ENCODE measurements at regions of chr16 and their contacts with region 1.

Region 1: DNA sequence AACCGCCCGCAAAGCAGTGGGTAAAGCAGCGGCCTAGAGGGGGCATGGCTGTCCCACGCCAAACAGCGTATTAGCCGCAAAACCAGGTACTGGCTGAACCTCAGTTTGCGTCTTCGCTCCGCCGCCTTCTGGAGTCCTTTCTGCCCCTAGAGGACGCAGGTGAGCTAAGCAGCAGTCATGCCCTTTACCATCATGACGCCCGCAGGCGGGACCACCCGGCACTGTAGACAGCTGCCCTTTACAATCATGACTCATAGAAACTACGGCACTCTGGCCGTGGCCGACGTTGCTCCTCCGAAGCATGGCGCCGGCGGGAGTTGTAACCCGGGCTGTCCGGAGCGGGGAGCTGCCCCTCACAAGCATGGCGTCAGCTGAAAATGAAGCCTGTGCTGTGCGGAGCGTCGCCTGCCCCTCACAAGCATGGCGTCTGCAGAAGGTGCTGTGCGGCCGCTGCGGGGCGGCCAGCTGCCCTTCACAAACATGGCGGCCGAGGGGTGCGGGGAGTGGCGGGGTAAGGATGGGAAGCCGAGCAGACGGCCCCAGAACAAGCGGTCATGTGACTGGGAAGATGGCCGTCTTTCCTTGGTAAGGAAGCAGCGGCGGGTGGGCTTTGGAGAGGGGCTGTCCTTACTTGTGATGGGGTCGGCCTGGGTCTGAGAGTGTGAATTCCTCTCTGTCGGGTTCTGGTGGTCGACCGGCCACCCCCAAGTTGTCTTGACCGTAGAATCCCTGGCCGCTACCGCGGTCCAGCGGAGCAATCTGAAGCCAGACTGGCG is at the start of gene VPS35L:
- DNase-seq: peak; percentile 96
- H3K4me3 Mint-ChIP-seq: peak within 1 kb of the TSS; percentile 90
- H3K27ac Mint-ChIP-seq: peak within 1 kb of the TSS; percentile 96
- H3K4me1 Mint-ChIP-seq: peaks cover 8% of the 10 kb centered on the region
- H3K27me3 Mint-ChIP-seq: no peaks in the 10 kb centered on the region
- CTCF ChIP-seq: peak; percentile 51
- total RNA-seq, gene VPS35L: 50.2 and 55.5 TPM in 2 replicates

Region 2: GRCh38 chr16:19521471-19522396 is 33.6 kb before region 1 on chr16 and contains the start of gene GDE1:
- CTCF ChIA-PET with region 1: interaction called, 24 read pairs
- POLR2A ChIA-PET with region 1: interaction called, 32 read pairs
- intact Hi-C with region 1: loop called (anchors 1 kb)
- DNase-seq: peak; percentile 90
- H3K4me3 Mint-ChIP-seq: peak within 1 kb of the TSS; percentile 87
- H3K27ac Mint-ChIP-seq: peak within 1 kb of the TSS; percentile 85
- H3K4me1 Mint-ChIP-seq: peaks cover 43% of the 10 kb centered on the region
- H3K27me3 Mint-ChIP-seq: no peaks in the 10 kb centered on the region
- CTCF ChIP-seq: peak; percentile 34
- total RNA-seq, gene GDE1: 44.7 and 44.9 TPM in 2 replicates

Region 3: DNA sequence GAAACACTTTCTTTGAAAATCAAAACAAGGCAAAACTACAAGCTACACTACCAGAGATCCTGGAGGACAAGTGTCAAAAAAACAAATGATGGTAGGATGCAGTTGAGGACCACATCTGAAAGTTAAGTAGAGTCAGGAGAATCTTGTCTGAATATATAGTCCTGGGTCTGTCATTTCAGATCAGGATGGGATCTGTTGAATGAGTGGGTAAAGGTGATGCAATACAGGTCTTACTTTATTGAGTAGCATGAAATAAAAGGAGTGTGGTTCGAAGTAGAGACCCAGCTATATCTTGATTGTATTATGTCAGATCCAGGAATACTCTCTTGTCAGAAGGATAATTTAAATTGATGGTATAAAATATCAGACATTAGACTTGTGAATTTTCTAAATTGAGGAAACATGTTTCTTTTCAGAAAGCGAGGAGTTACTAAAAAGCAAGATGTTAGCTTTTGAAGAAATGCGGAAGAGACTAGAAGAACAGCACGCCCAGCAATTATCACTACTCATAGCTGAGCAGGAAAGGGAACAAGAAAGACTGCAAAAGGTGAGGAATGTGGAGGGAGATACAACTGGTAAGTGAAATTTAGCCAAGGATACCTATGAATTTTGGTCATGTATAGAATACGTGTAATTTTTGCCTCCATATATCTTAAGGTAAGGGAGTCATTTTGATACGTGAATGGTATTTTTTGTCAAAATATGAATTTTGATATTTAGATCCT is 14.9 kb before region 1 on chr16:
- CTCF ChIA-PET with region 1: interaction called, 29 read pairs
- POLR2A ChIA-PET with region 1: interaction called, 8 read pairs
- intact Hi-C with region 1: no loop called
- DNase-seq: no peak
- H3K4me3 Mint-ChIP-seq: no peak overlapping the region
- H3K27ac Mint-ChIP-seq: no peak overlapping the region
- H3K4me1 Mint-ChIP-seq: no peaks in the 10 kb centered on the region
- H3K27me3 Mint-ChIP-seq: no peaks in the 10 kb centered on the region
- CTCF ChIP-seq: no peak

Region 4: GRCh38 chr16:19595043-19595767 is 39.9 kb after region 1 on chr16:
- CTCF ChIA-PET with region 1: interaction called, 55 read pairs
- POLR2A ChIA-PET with region 1: no interaction called
- intact Hi-C with region 1: loop called (anchors 5 kb)
- DNase-seq: peak; percentile 83
- H3K4me3 Mint-ChIP-seq: peak overlapping the region; percentile 40
- H3K27ac Mint-ChIP-seq: no peak overlapping the region
- H3K4me1 Mint-ChIP-seq: peaks cover 14% of the 10 kb centered on the region
- H3K27me3 Mint-ChIP-seq: no peaks in the 10 kb centered on the region
- CTCF ChIP-seq: no peak